Right lobe of liver (tissue), 6 donors: ENCODE measurements at regions of chr4 and their contacts with region 1.

Region 1: GRCh38 chr4:53605783-53606182 is 14.5 kb upstream of the LNX1 start:
- DNase-seq: no peak
- ATAC-seq: peak; percentile 35 to 76 (median 44)
- H3K4me3 ChIP-seq: no peak overlapping the region
- H3K27ac ChIP-seq: no peak overlapping the region
- H3K4me1 ChIP-seq: no peaks in the 10 kb centered on the region
- H3K27me3 ChIP-seq: no peaks in the 10 kb centered on the region
- CTCF ChIP-seq: no peak
- POLR2A ChIP-seq: no peak

Region 2: DNA sequence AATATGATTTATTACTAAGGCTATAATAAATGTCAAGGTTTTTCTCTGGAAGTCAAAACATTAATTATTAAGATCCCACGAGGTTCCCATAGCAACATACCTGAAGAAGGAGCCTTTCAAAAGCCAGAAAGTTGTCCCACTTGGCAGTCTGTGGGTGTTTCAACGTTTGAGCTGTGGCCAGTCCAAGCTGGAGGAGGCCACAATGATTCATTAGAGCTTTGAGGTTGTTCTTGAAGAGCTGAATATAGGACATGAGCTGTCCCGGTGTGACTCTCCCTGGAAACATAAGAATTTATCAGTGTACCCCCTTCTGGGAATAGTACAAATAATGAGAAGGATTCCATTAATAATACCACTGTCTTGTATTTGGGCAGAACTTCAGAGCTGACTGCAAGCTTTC is 332.1 kb before region 1 on chr4:
- intact Hi-C with region 1: no loop called
- DNase-seq: no peak
- ATAC-seq: no peak
- H3K4me3 ChIP-seq: no peak overlapping the region
- H3K27ac ChIP-seq: no peak overlapping the region
- H3K4me1 ChIP-seq: no peaks in the 10 kb centered on the region
- H3K27me3 ChIP-seq: no peaks in the 10 kb centered on the region
- CTCF ChIP-seq: no peak
- POLR2A ChIP-seq: no peak

Region 3: GRCh38 chr4:53490965-53491622 is 114.7 kb before region 1 on chr4:
- intact Hi-C with region 1: loop called in 1 of 2 experiments (anchors 5 kb)
- DNase-seq: no peak
- ATAC-seq: peak; percentile 82 to 96 (median 86)
- H3K4me3 ChIP-seq: no peak overlapping the region
- H3K27ac ChIP-seq: no peak overlapping the region
- H3K4me1 ChIP-seq: peaks cover 0 to 6% (median 0%) of the 10 kb centered on the region in 4 donors
- H3K27me3 ChIP-seq: no peaks in the 10 kb centered on the region
- CTCF ChIP-seq: peak; percentile 68 to 76 (median 70)
- POLR2A ChIP-seq: no peak

Region 4: DNA sequence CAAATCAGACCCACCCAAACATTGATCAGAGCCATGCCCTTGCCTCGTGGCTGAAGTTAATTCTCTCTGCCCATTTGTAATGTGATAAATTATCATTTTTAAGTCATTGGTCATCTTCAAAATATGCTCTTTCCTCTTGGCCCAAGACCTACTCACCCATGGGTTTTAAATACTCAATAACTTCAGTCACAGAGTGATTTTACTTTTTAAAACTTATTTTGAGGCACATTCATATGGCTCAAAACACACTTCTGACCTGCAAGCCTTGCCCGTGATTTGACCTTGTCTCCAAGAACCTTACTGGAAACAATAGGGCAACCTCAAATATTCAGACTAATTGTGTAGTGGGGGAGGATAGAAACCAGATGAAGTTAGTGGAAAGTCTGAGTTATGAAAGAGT is 161.7 kb after region 1 on chr4:
- intact Hi-C with region 1: no loop called
- DNase-seq: no peak
- ATAC-seq: no peak
- H3K4me3 ChIP-seq: no peak overlapping the region
- H3K27ac ChIP-seq: no peak overlapping the region
- H3K4me1 ChIP-seq: no peaks in the 10 kb centered on the region
- H3K27me3 ChIP-seq: no peaks in the 10 kb centered on the region
- CTCF ChIP-seq: no peak
- POLR2A ChIP-seq: no peak